ENCODE measurements at regions of chr2 and their contacts with region 1.

Region 1: DNA sequence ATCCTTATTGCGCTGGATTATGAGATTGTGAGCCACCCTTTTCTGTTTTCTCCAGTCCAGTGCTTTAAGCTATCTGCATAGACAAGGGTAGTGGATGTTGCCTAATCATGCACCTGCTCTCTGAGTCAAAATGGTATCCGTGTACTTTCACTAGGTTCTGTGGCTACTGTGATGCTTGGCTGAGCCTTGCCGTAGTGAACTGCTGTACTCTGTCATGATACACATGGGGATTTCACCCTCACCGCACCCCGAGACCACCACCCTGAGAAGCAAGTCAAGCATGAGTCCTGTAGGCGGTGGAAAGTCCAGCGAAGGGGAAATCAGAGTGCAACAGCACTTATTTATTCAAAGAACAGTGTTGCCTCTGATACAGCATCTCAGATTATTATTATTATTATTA is 55.0 kb downstream of the ARHGAP25 start:
- DNase-seq: peak in 2 of 9 experiments; percentile 45 to 53
- ATAC-seq: peak; percentile 45
- H3K4me3 ChIP-seq: no peak overlapping the region
- H3K4me3 Mint-ChIP-seq: no peak overlapping the region
- H3K27ac ChIP-seq: peak overlapping the region in 1 of 2 experiments; percentile 31
- H3K27ac Mint-ChIP-seq: peak overlapping the region; percentile 76
- H3K4me1 ChIP-seq: peaks cover 42% of the 10 kb centered on the region
- H3K4me1 Mint-ChIP-seq: peaks cover 50% of the 10 kb centered on the region
- H3K27me3 ChIP-seq: no peaks in the 10 kb centered on the region
- H3K27me3 Mint-ChIP-seq: no peaks in the 10 kb centered on the region
- CTCF ChIP-seq: no peak

Region 2: DNA sequence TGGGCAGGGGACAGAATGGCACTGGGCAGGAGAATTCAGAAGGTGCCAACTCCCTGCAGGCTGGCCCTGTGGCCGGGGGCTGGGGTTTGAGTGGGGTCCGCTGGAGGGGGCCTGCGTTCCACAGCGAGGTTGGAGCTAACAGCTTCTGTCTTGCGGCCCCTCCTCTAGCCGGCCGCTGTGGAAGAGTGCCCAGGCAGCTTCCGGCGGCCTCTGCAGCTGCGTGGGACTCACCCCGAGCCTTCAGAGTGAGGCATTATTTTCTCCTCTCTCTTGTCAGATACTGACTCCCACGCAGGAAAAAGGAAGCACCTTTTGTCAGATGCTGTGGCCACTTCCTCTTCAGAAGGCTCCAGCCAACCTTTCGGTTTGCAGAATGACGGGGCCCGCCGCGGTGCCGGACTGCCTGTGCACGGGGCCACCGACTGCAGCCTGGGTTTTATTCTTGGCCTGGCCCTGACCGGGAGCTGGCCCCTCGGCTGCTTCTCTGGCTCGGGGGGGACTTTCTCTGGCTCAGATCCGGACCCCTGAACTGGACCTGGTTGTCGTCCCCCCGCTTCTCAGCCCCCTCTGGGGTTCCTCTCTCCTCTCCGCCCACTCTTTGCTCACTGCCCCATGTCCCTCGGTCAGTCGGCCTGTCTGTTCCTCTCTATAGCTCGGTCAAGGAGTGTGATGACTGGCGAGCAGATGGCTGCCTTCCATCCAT is 14.9 kb before region 1 on chr2:
- CTCF ChIA-PET with region 1: interaction called, 10 read pairs
- POLR2A ChIA-PET with region 1: interaction called, 11 read pairs
- intact Hi-C with region 1: loop called (anchors 1 to 2 kb)
- DNase-seq: peak; percentile 15 to 84 (median 58)
- ATAC-seq: peak; percentile 38
- H3K4me3 ChIP-seq: peak overlapping the region; percentile 61 to 85
- H3K4me3 Mint-ChIP-seq: peak overlapping the region; percentile 84
- H3K27ac ChIP-seq: peak overlapping the region; percentile 64 to 88
- H3K27ac Mint-ChIP-seq: peak overlapping the region; percentile 100
- H3K4me1 ChIP-seq: peaks cover 81% of the 10 kb centered on the region
- H3K4me1 Mint-ChIP-seq: peaks cover 89% of the 10 kb centered on the region
- H3K27me3 ChIP-seq: no peaks in the 10 kb centered on the region
- H3K27me3 Mint-ChIP-seq: no peaks in the 10 kb centered on the region
- CTCF ChIP-seq: no peak

Measured in CD8-positive, alpha-beta T cell (primary cell).